ENCODE measurements at regions of chr16 and their contacts with region 1.

Region 1: DNA sequence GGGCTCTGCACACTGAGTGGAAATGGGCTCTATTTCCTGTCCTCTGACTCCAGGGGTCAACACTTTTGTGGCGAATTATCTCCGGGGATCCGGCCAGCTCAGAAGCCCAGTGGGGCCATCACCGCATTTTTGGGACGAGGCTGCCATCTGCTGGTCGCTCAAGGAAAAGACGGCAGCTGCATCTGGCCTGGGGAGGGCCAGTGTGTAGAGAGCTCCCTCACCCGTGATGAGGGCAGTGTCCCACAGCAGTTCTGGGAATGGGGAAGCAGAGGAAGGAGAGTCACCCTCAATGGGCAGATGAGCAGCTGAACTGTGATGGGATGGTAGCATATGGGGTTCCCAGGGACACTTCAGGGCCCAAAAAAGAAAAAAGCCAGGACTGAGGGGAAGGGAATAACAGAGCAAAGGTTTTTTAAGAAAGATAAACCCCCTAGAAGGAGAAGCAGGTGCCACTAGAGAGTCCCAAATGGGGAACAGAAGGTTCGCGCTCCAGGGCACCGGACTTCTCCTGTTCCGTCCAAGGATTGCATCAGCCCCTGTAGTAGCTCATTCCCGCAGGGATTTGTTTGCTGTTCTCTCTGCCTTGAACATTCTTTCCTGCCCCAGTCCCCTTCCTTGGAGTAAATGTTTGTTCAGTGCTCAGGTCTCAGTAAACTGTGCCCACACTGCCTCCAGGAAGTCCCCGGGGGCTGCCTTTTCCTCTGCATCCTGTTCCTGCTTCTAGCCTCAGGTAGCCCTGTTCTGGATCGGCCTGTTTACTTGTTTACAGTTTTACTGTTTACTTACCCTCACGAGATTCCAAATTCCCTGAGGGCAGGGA is 9.3 kb upstream of the ABCC12 start:
- DNase-seq: peak; percentile 40 to 59 (median 49)
- H3K4me3 ChIP-seq: no peak overlapping the region
- H3K4me3 Mint-ChIP-seq: peak overlapping the region in 1 of 8 donors; percentile 39
- H3K27ac ChIP-seq: no peak overlapping the region
- H3K27ac Mint-ChIP-seq: no peak overlapping the region
- H3K4me1 ChIP-seq: peaks cover 4% of the 10 kb centered on the region
- H3K4me1 Mint-ChIP-seq: peaks cover 0 to 4% (median 3%) of the 10 kb centered on the region in 4 donors
- H3K27me3 ChIP-seq: no peaks in the 10 kb centered on the region
- H3K27me3 Mint-ChIP-seq: peaks cover under 1 to 2% of the 10 kb centered on the region in 2 donors

Region 2: DNA sequence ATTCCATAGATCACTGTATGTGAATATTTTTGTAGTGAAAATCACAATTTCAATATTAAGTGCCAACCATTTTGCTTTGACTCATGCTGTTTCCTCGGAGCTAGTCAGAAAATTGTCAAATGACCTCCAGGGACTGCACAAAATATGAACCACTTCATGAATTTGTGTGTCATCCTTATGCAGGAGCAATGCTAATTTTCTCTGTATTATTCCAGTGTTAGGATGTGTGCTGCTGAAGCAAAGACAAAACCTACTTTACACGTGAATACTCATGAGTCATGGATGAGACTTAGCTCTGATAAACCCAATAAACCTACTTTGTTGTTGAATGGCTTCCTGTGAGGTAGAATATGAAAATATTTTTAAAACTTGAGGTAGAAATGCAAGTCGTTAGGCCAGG is 1609.2 kb before region 1 on chr16:
- CTCF ChIA-PET with region 1: interaction called, 5 read pairs
- POLR2A ChIA-PET with region 1: no interaction called
- intact Hi-C with region 1: loop called (anchors 2 kb)
- DNase-seq: no peak
- H3K4me3 ChIP-seq: no peak overlapping the region
- H3K4me3 Mint-ChIP-seq: no peak overlapping the region
- H3K27ac ChIP-seq: no peak overlapping the region
- H3K27ac Mint-ChIP-seq: no peak overlapping the region
- H3K4me1 ChIP-seq: no peaks in the 10 kb centered on the region
- H3K4me1 Mint-ChIP-seq: peaks cover 0 to 2% (median under 1%) of the 10 kb centered on the region in 4 donors
- H3K27me3 ChIP-seq: no peaks in the 10 kb centered on the region
- H3K27me3 Mint-ChIP-seq: peaks cover 11% of the 10 kb centered on the region in 2 donors

Region 3: DNA sequence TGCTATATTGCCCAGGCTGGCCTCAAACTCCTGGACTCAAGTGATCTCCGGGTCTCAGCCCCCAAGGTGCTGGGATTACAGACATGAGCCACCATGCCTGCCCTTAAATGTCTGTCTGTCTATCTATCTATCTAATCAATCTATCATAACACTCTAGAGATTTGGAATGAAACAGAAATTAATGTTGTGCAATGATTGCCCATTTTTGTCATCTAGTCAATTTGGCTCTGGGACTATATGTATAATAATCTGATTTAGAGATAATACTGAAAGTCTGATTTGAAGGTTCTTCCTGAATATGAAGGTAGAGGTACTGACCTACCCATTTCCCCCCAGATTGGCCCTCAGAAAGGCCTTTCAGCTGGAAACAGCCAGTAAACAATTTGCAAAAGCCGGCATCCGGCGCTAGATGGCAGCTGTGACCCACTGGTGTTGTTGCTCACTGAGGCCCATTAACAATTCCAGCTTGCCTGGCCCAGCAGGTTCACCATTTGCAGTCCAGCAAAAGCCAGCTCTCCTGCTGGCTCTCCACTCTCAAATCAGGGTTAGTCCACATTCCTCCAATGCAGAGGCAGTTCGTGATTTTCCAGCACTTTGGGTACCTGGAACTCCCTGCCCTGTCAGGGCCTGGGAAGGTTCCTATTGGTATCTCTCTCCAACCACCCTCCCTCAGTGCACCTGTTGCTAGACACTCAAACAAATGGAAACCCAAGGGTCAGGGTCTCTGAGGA is 1311.2 kb before region 1 on chr16:
- CTCF ChIA-PET with region 1: interaction called, 3 read pairs
- POLR2A ChIA-PET with region 1: interaction called, 3 read pairs
- intact Hi-C with region 1: loop called (anchors 10 kb)
- DNase-seq: peak in 4 of 5 donors; percentile 34 to 55 (median 46)
- H3K4me3 ChIP-seq: no peak overlapping the region
- H3K4me3 Mint-ChIP-seq: no peak overlapping the region
- H3K27ac ChIP-seq: no peak overlapping the region
- H3K27ac Mint-ChIP-seq: no peak overlapping the region
- H3K4me1 ChIP-seq: no peaks in the 10 kb centered on the region
- H3K4me1 Mint-ChIP-seq: peaks cover 0 to 2% (median 0%) of the 10 kb centered on the region in 4 donors
- H3K27me3 ChIP-seq: no peaks in the 10 kb centered on the region
- H3K27me3 Mint-ChIP-seq: peaks cover 1 to 7% of the 10 kb centered on the region in 2 donors

Region 4: DNA sequence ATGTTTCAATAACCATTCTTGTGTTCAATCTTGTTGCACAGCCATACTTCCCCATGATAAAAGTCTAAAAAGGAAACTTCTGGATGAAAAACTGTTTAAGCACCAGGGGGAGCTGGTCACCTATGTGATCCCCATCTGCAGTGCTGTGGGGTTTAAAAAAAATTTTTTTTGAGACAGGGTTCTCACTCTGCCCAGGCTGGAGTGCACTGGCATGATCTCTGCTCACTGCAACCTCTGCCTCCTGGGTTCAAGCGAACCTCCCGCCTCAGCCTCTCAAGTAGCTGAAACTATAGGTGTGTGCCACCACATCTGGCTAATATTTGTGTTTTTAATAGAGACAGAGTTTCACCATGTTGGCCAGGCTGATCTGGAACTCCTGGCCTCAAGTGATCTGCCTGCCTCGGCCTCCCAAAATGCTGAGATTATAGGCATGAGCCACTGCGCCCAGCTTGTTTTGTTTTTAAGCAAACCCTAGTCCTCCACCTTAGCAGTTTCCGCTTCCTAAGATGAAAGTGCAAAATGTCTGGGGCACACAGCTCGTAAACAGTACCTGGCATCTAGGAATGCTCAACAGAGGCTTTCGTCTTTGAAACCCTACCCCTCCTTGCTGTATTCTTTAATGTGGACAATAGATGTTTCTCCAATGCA is 1217.1 kb before region 1 on chr16:
- CTCF ChIA-PET with region 1: interaction called, 10 read pairs
- POLR2A ChIA-PET with region 1: no interaction called
- intact Hi-C with region 1: loop called (anchors 1 kb)
- DNase-seq: peak in 4 of 5 donors; percentile 47 to 54 (median 50)
- H3K4me3 ChIP-seq: no peak overlapping the region
- H3K4me3 Mint-ChIP-seq: peak overlapping the region in 2 of 8 donors; percentile 4 to 46
- H3K27ac ChIP-seq: no peak overlapping the region
- H3K27ac Mint-ChIP-seq: peak overlapping the region in 6 of 7 donors; percentile 29 to 68 (median 52)
- H3K4me1 ChIP-seq: peaks cover 15% of the 10 kb centered on the region
- H3K4me1 Mint-ChIP-seq: peaks cover 8 to 27% (median 15%) of the 10 kb centered on the region in 4 donors
- H3K27me3 ChIP-seq: no peaks in the 10 kb centered on the region
- H3K27me3 Mint-ChIP-seq: no peaks in the 10 kb centered on the region

Region 5: DNA sequence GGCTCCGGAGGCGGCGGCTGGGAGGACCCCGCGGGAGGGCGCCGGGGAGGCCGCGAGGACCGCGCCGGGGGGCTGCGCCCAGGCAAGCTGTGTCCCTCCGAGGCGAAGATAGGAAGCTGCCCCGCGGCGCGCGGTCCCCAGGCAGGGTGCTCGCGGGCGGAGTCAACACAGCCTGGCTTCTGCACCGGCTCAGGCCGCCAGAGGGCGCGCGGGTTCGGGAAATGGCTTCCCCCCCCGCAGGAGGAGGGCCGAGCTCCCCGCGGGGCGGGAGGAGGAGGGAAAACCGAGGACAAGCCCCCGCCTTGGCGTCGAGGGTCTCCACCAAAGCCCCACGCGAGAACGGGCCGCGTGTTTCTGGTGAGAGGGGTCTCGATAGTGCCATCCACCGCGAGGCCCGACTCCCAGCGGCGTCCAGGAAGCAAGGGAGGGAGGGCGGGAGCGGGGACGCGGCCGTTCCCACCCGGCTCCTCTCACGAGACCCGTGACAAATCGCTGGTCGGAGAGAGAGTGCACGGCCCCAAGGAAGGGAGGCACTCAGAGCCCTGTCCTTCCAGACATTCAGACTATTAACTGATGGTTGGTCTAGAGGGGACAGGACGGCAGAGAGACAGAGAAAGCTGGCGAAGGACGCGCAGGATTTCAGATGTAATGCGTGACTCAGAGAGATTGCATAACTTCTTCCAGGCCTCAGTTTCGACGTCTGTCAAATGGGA is 1127.2 kb before region 1 on chr16:
- CTCF ChIA-PET with region 1: interaction called, 39 read pairs
- POLR2A ChIA-PET with region 1: interaction called, 8 read pairs
- intact Hi-C with region 1: loop called (anchors 1 kb)
- DNase-seq: peak; percentile 81 to 89 (median 85)
- H3K4me3 ChIP-seq: peak overlapping the region; percentile 61 to 67
- H3K4me3 Mint-ChIP-seq: peak overlapping the region; percentile 68 to 85 (median 80)
- H3K27ac ChIP-seq: peak overlapping the region; percentile 45
- H3K27ac Mint-ChIP-seq: peak overlapping the region in 4 of 7 donors; percentile 8 to 71 (median 42)
- H3K4me1 ChIP-seq: no peaks in the 10 kb centered on the region
- H3K4me1 Mint-ChIP-seq: peaks cover 0 to 8% (median 5%) of the 10 kb centered on the region in 4 donors
- H3K27me3 ChIP-seq: no peaks in the 10 kb centered on the region
- H3K27me3 Mint-ChIP-seq: no peaks in the 10 kb centered on the region

Region 6: DNA sequence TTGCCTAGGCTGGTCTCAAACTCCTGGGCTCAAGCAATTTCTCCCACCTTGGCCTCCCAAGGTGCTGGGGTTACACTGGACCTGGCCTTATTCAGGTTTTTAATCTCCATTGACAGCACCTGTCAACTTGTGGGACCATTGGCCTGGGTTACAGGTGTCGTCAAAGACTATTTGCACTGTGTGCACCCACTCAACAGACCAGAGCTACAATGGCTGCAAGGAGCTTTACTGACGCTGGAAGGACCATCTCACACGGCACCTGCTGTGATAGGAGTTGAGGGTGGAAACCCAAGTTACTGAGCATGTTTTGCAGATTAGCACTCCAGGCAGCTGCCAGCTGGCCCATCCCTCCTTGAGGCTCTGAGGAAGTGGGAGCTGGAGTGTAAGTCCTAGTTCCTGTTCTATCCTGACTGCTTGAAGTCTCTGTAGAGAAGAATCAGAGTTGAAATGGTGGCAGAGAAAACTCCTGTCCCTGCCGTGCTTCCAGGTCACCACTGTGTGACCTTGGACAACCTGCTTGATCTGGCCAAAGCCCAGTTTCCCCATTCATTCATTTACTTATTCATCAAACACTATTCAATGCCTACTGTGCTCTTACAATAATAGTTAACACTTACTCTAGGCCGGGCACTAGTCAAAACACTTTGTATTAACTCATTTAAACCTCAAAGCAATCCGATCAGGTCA is 36.5 kb after region 1 on chr16:
- CTCF ChIA-PET with region 1: no interaction called
- POLR2A ChIA-PET with region 1: no interaction called
- intact Hi-C with region 1: no loop called
- DNase-seq: no peak
- H3K4me3 ChIP-seq: no peak overlapping the region
- H3K4me3 Mint-ChIP-seq: no peak overlapping the region
- H3K27ac ChIP-seq: no peak overlapping the region
- H3K27ac Mint-ChIP-seq: peak overlapping the region in 1 of 7 donors; percentile 17
- H3K4me1 ChIP-seq: no peaks in the 10 kb centered on the region
- H3K4me1 Mint-ChIP-seq: no peaks in the 10 kb centered on the region
- H3K27me3 ChIP-seq: no peaks in the 10 kb centered on the region
- H3K27me3 Mint-ChIP-seq: peaks cover 5 to 9% of the 10 kb centered on the region in 2 donors

Region 7: GRCh38 chr16:48318630-48319029 is 153.5 kb after region 1 on chr16:
- CTCF ChIA-PET with region 1: no interaction called
- POLR2A ChIA-PET with region 1: no interaction called
- intact Hi-C with region 1: no loop called
- DNase-seq: peak; percentile 47 to 69 (median 61)
- H3K4me3 ChIP-seq: no peak overlapping the region
- H3K4me3 Mint-ChIP-seq: peak overlapping the region; percentile 56 to 87 (median 77)
- H3K27ac ChIP-seq: no peak overlapping the region
- H3K27ac Mint-ChIP-seq: peak overlapping the region; percentile 65 to 90 (median 85)
- H3K4me1 ChIP-seq: peaks cover 32% of the 10 kb centered on the region
- H3K4me1 Mint-ChIP-seq: peaks cover 19 to 48% (median 30%) of the 10 kb centered on the region in 4 donors
- H3K27me3 ChIP-seq: no peaks in the 10 kb centered on the region
- H3K27me3 Mint-ChIP-seq: no peaks in the 10 kb centered on the region